ENCODE measurements at regions of chr10 and their contacts with region 1.

Region 1: DNA sequence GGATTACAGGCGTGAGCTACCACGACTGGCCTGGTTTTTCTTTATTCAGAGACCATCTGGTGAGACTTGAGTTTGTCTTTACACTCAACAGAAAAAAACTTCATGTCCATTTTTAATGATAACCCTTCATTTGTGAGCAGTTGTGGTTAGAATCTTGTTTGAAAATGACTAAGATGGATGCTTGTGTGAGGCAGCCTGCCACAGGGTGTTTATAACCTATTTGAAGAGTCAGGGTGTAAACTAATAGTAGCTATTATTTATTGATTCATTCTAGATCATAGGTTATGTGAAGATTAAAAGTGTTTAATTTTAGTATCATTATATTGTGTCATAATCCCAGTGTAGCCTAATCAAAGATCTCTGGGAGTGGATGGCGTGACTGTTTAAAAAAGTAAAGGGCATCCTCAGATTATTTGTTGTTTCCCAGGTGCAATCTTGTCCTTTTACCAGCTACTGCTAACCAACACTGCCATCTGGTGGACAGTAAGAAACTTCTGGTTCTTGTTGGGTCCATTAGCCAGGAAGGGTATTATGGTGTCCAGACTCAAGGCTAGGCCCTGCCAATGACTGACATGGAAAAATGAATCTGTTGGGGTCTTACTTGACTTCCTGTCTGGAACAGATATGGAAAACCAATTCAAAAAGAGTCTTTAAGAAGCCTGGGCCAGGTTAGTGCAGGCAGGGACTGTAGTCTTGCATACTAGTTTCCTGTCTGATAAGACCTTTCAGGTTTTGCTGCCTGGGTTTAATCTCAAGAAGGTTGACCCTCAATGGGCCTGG is 24.9 kb downstream of the NRBF2 start:
- DNase-seq: peak in 7 of 9 donors; percentile 43 to 71 (median 65)
- ATAC-seq: peak; percentile 84
- H3K4me3 ChIP-seq: no peak overlapping the region
- H3K4me3 Mint-ChIP-seq: no peak overlapping the region
- H3K27ac ChIP-seq: no peak overlapping the region
- H3K27ac Mint-ChIP-seq: peak overlapping the region in 2 of 9 donors; percentile 2 to 30
- H3K4me1 ChIP-seq: no peaks in the 10 kb centered on the region
- H3K4me1 Mint-ChIP-seq: peaks cover 6 to 18% (median 11%) of the 10 kb centered on the region in 7 donors
- H3K27me3 ChIP-seq: no peaks in the 10 kb centered on the region
- H3K27me3 Mint-ChIP-seq: no peaks in the 10 kb centered on the region

Region 2: DNA sequence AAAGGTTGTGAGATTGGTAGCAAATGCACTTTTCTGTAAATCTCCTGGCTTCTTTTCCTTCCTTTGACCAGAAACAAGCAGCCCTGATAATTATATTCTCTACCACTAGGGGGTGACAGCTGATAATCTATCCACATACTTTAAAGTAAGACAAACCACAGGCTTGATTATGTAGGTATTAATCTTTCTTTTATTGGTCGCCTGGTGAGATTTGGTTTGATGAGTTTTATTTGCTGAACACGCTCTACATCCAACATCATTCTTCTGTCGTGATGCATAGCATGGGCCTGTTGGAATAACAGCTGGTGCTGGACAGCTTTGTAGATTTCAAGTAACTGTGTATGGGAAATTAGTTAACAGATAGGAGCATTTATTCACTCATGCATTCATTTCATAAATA is 720.3 kb before region 1 on chr10:
- CTCF ChIA-PET with region 1: interaction called, 42 read pairs
- POLR2A ChIA-PET with region 1: no interaction called
- intact Hi-C with region 1: loop called (anchors 1 kb)
- DNase-seq: peak in 7 of 9 donors; percentile 42 to 71 (median 65)
- ATAC-seq: peak; percentile 79
- H3K4me3 ChIP-seq: no peak overlapping the region
- H3K4me3 Mint-ChIP-seq: no peak overlapping the region
- H3K27ac ChIP-seq: no peak overlapping the region
- H3K27ac Mint-ChIP-seq: no peak overlapping the region
- H3K4me1 ChIP-seq: no peaks in the 10 kb centered on the region
- H3K4me1 Mint-ChIP-seq: peaks cover 0 to 12% (median 3%) of the 10 kb centered on the region in 7 donors
- H3K27me3 ChIP-seq: no peaks in the 10 kb centered on the region
- H3K27me3 Mint-ChIP-seq: peaks cover 0 to 24% (median 4%) of the 10 kb centered on the region in 5 donors

Region 3: GRCh38 chr10:62554632-62555199 is 603.3 kb before region 1 on chr10:
- CTCF ChIA-PET with region 1: no interaction called
- POLR2A ChIA-PET with region 1: no interaction called
- intact Hi-C with region 1: loop called in 1 of 2 experiments (anchors 1 kb)
- DNase-seq: peak in 7 of 9 donors; percentile 8 to 34 (median 24)
- ATAC-seq: peak; percentile 67
- H3K4me3 ChIP-seq: no peak overlapping the region
- H3K4me3 Mint-ChIP-seq: no peak overlapping the region
- H3K27ac ChIP-seq: no peak overlapping the region
- H3K27ac Mint-ChIP-seq: no peak overlapping the region
- H3K4me1 ChIP-seq: no peaks in the 10 kb centered on the region
- H3K4me1 Mint-ChIP-seq: no peaks in the 10 kb centered on the region
- H3K27me3 ChIP-seq: no peaks in the 10 kb centered on the region
- H3K27me3 Mint-ChIP-seq: peaks cover 4 to 34% (median 11%) of the 10 kb centered on the region in 5 donors

Region 4: GRCh38 chr10:62610649-62611229 is 547.3 kb before region 1 on chr10:
- CTCF ChIA-PET with region 1: interaction called, 12 read pairs
- POLR2A ChIA-PET with region 1: no interaction called
- intact Hi-C with region 1: loop called (anchors 1 kb)
- DNase-seq: peak; percentile 48 to 81 (median 74)
- ATAC-seq: peak; percentile 93
- H3K4me3 ChIP-seq: no peak overlapping the region
- H3K4me3 Mint-ChIP-seq: no peak overlapping the region
- H3K27ac ChIP-seq: no peak overlapping the region
- H3K27ac Mint-ChIP-seq: peak overlapping the region in 1 of 9 donors; percentile 50
- H3K4me1 ChIP-seq: no peaks in the 10 kb centered on the region
- H3K4me1 Mint-ChIP-seq: peaks cover 0 to 36% (median 0%) of the 10 kb centered on the region in 7 donors
- H3K27me3 ChIP-seq: no peaks in the 10 kb centered on the region
- H3K27me3 Mint-ChIP-seq: peaks cover 0 to 14% (median 4%) of the 10 kb centered on the region in 5 donors

Region 5: DNA sequence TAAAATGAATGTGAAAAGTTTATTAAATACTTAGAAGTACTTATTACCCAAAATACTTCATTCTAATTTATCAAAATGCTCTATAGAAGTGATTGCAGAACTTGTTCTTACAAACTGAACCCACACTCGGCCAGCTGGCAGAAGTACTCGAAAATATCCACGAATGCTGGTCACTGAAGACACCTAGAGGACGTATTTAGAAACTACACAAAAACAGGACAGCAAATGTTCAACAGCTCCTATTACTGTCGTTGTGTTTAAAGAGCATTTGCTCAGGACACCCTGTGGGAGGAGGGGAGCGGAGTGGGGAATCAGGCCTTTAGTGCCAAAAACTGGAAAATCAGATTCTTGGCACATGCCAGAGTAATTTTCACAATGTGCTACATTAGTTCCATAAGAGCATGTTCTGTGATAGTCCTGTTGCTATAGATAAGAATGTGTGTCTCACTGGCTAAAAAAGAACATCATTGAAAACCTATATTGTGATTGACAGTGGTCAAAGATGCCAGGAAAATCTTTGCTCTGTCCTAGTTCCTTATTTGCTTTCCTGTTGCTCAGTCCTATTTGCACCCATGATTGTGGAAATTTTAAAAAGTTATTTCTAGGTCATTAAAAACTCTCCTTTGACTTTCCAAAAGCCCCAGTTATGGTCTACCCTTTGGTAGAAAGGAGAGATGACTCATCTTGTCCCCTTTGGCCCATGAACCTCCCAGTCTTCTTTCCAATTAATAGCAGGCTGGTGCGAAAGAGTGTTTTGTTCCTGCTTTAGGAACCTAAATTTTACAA is 73.9 kb before region 1 on chr10:
- CTCF ChIA-PET with region 1: no interaction called
- POLR2A ChIA-PET with region 1: no interaction called
- intact Hi-C with region 1: loop called in 1 of 2 experiments (anchors 1 kb)
- DNase-seq: peak in 7 of 9 donors; percentile 20 to 58 (median 43)
- ATAC-seq: peak; percentile 78
- H3K4me3 ChIP-seq: no peak overlapping the region
- H3K4me3 Mint-ChIP-seq: no peak overlapping the region
- H3K27ac ChIP-seq: no peak overlapping the region
- H3K27ac Mint-ChIP-seq: no peak overlapping the region
- H3K4me1 ChIP-seq: no peaks in the 10 kb centered on the region
- H3K4me1 Mint-ChIP-seq: no peaks in the 10 kb centered on the region
- H3K27me3 ChIP-seq: no peaks in the 10 kb centered on the region
- H3K27me3 Mint-ChIP-seq: peaks cover 4 to 31% (median 6%) of the 10 kb centered on the region in 5 donors

Region 6: GRCh38 chr10:63281967-63282366 is 123.9 kb after region 1 on chr10:
- CTCF ChIA-PET with region 1: no interaction called
- POLR2A ChIA-PET with region 1: no interaction called
- intact Hi-C with region 1: no loop called
- DNase-seq: no peak
- ATAC-seq: no peak
- H3K4me3 ChIP-seq: no peak overlapping the region
- H3K4me3 Mint-ChIP-seq: no peak overlapping the region
- H3K27ac ChIP-seq: no peak overlapping the region
- H3K27ac Mint-ChIP-seq: peak overlapping the region in 2 of 9 donors; percentile 62 to 63
- H3K4me1 ChIP-seq: no peaks in the 10 kb centered on the region
- H3K4me1 Mint-ChIP-seq: peaks cover 0 to 25% (median 13%) of the 10 kb centered on the region in 7 donors
- H3K27me3 ChIP-seq: no peaks in the 10 kb centered on the region
- H3K27me3 Mint-ChIP-seq: no peaks in the 10 kb centered on the region

Region 7: GRCh38 chr10:63720072-63720537 is 562.1 kb after region 1 on chr10:
- CTCF ChIA-PET with region 1: interaction called, 10 read pairs
- POLR2A ChIA-PET with region 1: no interaction called
- intact Hi-C with region 1: loop called in 1 of 2 experiments (anchors 2 kb)
- DNase-seq: peak in 8 of 9 donors; percentile 33 to 74 (median 63)
- ATAC-seq: peak; percentile 87
- H3K4me3 ChIP-seq: no peak overlapping the region
- H3K4me3 Mint-ChIP-seq: peak overlapping the region in 3 of 10 donors; percentile 8 to 63 (median 16)
- H3K27ac ChIP-seq: no peak overlapping the region
- H3K27ac Mint-ChIP-seq: peak overlapping the region in 5 of 9 donors; percentile 1 to 71 (median 68)
- H3K4me1 ChIP-seq: no peaks in the 10 kb centered on the region
- H3K4me1 Mint-ChIP-seq: peaks cover 0 to 22% (median 7%) of the 10 kb centered on the region in 7 donors
- H3K27me3 ChIP-seq: no peaks in the 10 kb centered on the region
- H3K27me3 Mint-ChIP-seq: peaks cover 2 to 11% (median 3%) of the 10 kb centered on the region in 5 donors